CD8-positive, alpha-beta T cell (primary cell): ENCODE measurements at regions of chr22 and their contacts with region 1.

Region 1: DNA sequence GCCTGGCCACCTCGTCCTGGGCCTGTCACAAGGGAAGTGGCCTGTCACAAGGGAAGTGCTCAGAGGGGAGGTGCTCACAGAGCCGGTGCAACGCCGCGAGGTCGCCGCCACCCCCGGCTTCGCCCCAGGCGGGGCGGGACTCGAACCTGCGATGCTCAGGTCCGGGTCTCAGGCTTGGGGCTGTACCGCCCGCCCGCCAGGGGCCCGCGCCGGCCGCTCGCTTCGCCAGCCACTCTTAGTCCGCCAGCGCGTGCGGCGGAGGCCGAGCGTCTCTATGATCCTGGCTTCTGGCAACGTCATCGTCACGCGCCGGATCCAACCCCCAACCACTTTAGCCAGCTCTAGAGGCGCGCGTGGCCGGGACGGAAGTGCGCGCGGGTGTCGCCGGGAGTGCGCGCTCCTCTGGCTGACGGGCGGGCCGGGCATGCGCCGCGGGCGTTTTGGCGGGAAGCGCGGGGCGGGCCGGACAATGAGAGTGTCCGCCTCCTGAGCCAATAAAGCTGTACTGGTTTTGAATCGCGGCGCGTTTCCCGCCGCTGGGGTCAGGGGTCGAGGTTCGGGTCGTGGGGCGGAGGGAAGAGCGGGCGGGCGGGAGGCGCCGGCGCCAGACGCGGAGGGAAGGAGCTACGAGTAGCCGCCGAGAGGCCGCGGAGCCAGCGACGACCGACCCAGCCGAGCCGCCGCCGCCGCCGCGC is at the start of gene TRMT2A:
- DNase-seq: peak; percentile 91 to 99 (median 96)
- ATAC-seq: peak; percentile 80
- H3K4me3 ChIP-seq: peak within 1 kb of the TSS; percentile 80 to 96
- H3K4me3 Mint-ChIP-seq: peak within 1 kb of the TSS; percentile 90
- H3K27ac ChIP-seq: peak within 1 kb of the TSS; percentile 81 to 94
- H3K27ac Mint-ChIP-seq: peak within 1 kb of the TSS; percentile 93
- H3K4me1 ChIP-seq: peaks cover 38% of the 10 kb centered on the region
- H3K4me1 Mint-ChIP-seq: peaks cover 43% of the 10 kb centered on the region
- H3K27me3 ChIP-seq: no peaks in the 10 kb centered on the region
- H3K27me3 Mint-ChIP-seq: no peaks in the 10 kb centered on the region
- CTCF ChIP-seq: no peak
- total RNA-seq, gene TRMT2A: 57.8 to 62.8 TPM

Region 2: DNA sequence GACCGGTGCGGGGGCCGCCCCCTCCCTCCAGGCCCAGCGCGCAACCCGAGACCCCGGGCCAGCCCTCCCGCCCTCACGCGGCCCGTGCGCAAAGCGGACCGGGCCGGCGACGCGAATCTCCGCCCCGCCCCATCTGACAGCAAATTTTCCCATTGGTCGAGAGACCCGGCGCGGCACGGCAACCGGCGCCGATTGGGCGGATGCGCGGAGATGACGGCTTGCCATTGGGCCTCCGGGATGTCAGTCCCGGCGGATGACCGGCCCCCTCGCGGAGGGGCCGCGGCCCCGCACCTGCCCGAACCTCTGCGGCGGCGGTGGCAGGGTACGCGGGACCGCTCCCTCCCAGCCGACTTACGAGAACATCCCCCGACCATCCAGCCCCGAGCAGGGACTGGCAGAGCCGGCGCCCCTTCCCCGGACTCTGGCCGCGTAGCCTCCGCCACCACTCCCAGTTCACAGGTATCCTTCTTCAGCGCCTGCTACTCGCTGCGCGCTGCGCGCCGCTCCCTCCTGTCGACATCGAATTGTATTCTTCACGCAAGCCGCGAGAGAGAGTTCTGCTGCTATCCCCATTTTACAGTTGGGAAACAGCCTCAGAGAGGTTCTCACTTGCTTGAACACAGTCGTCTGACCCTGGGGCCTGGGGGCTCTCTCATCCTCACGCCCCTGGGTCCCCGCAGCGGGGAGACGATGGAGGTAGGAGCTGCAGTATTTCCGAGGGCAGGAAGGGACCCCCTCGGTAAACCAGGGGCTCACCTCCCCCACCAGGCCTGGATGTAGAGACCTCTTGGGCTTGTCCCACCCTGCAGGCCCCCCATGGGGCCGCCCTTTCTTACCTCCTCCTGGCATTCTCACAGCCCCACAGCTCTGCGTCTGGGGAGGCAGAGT is 100.1 kb before region 1 on chr22 and contains the start of gene ARVCF:
- CTCF ChIA-PET with region 1: interaction called, 3 read pairs
- POLR2A ChIA-PET with region 1: interaction called, 9 read pairs
- intact Hi-C with region 1: loop called (anchors 1 kb)
- DNase-seq: peak; percentile 85 to 96 (median 92)
- ATAC-seq: peak; percentile 66
- H3K4me3 ChIP-seq: peak within 1 kb of the TSS; percentile 79 to 81
- H3K4me3 Mint-ChIP-seq: peak within 1 kb of the TSS; percentile 91
- H3K27ac ChIP-seq: no peak within 1 kb of the TSS
- H3K27ac Mint-ChIP-seq: peak within 1 kb of the TSS; percentile 14
- H3K4me1 ChIP-seq: peaks cover 19% of the 10 kb centered on the region
- H3K4me1 Mint-ChIP-seq: peaks cover 25% of the 10 kb centered on the region
- H3K27me3 ChIP-seq: no peaks in the 10 kb centered on the region
- H3K27me3 Mint-ChIP-seq: no peaks in the 10 kb centered on the region
- CTCF ChIP-seq: no peak
- total RNA-seq, gene ARVCF: 1.1 to 2.3 TPM

Region 3: DNA sequence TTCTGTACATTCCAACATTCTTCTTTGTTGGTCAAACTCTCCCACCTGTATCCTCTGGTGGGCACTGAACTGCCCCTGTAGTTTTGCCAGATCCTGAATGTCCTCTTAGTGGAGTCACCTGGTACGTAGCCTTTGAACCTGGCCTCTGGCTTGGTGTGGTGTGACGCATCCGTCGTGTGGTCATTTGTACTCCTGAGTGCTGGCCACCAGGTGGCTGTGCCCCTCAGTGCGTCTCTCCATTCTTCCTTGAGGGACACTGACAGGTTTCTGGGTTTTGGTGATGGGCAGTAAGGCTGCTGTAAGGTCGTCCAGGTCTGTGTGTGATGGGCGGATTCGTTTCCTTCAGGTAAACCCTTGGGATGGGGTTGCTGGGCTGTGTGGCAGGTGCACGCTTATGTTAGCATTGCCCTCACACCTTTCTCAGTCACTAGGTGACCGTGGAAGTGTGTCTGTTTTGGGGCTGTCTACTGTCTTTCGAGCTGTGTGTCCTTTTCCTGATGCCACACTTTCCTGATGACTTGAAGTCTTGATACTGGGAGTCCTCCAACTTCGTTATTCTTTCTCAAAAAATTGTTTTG is 14.8 kb before region 1 on chr22:
- CTCF ChIA-PET with region 1: interaction called, 26 read pairs
- POLR2A ChIA-PET with region 1: interaction called, 5 read pairs
- intact Hi-C with region 1: loop called (anchors 1 kb)
- DNase-seq: no peak
- ATAC-seq: no peak
- H3K4me3 ChIP-seq: no peak overlapping the region
- H3K4me3 Mint-ChIP-seq: no peak overlapping the region
- H3K27ac ChIP-seq: peak overlapping the region in 1 of 2 experiments; percentile 17
- H3K27ac Mint-ChIP-seq: peak overlapping the region; percentile 70
- H3K4me1 ChIP-seq: peaks cover 37% of the 10 kb centered on the region
- H3K4me1 Mint-ChIP-seq: peaks cover 48% of the 10 kb centered on the region
- H3K27me3 ChIP-seq: no peaks in the 10 kb centered on the region
- H3K27me3 Mint-ChIP-seq: no peaks in the 10 kb centered on the region
- CTCF ChIP-seq: no peak

Region 4: GRCh38 chr22:20174785-20175596 is 57.9 kb after region 1 on chr22:
- CTCF ChIA-PET with region 1: no interaction called
- POLR2A ChIA-PET with region 1: no interaction called
- intact Hi-C with region 1: no loop called
- DNase-seq: no peak
- ATAC-seq: no peak
- H3K4me3 ChIP-seq: no peak overlapping the region
- H3K4me3 Mint-ChIP-seq: no peak overlapping the region
- H3K27ac ChIP-seq: no peak overlapping the region
- H3K27ac Mint-ChIP-seq: no peak overlapping the region
- H3K4me1 ChIP-seq: no peaks in the 10 kb centered on the region
- H3K4me1 Mint-ChIP-seq: no peaks in the 10 kb centered on the region
- H3K27me3 ChIP-seq: no peaks in the 10 kb centered on the region
- H3K27me3 Mint-ChIP-seq: no peaks in the 10 kb centered on the region
- CTCF ChIP-seq: no peak

Region 5: DNA sequence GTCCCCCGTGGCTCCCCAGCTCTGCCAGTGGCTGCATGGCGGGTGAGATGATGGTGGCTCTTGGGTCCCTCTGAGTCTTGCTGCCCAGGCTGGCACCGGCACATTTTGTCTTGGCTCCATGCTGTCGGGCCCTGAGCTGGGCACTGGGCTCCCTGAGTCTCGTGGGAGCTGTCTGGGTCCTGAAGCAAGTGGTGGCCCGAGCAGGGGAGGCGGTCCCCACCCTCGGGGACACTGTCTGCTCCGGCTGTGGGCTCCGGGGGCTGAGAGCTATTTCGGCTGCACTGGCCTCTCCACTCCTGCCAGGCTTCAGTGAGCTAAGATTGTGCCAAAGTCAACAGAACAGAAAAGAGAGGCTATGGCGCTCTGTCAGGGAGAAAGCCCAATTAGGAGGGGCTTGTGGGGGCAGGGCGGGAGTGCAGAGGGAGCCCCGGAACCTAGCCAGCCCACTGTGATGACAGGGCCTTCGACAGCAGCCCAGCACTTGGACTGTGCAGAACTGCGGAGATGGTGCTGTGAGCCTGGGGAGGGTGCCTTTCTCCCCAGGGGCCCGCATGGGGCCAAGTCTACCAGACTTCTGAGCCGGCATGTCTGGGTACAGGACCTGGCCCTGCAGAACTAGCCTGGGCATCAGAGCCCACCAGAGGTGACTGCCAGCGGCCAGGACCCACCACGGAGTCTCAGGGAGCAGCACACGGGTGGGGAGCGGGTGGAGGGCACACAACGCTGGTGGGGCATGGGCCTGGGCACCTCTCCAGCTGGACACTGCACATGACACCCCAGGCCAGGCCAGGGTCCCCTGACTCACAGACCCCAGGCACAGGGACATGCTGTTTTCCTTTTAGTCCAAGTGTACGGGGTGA is 113.0 kb after region 1 on chr22:
- CTCF ChIA-PET with region 1: no interaction called
- POLR2A ChIA-PET with region 1: no interaction called
- intact Hi-C with region 1: no loop called
- DNase-seq: no peak
- ATAC-seq: no peak
- H3K4me3 ChIP-seq: no peak overlapping the region
- H3K4me3 Mint-ChIP-seq: no peak overlapping the region
- H3K27ac ChIP-seq: no peak overlapping the region
- H3K27ac Mint-ChIP-seq: no peak overlapping the region
- H3K4me1 ChIP-seq: no peaks in the 10 kb centered on the region
- H3K4me1 Mint-ChIP-seq: no peaks in the 10 kb centered on the region
- H3K27me3 ChIP-seq: no peaks in the 10 kb centered on the region
- H3K27me3 Mint-ChIP-seq: no peaks in the 10 kb centered on the region
- CTCF ChIP-seq: no peak

Region 6: GRCh38 chr22:20393909-20394691 is 277.0 kb after region 1 on chr22 and contains the start of gene ZNF74:
- CTCF ChIA-PET with region 1: no interaction called
- POLR2A ChIA-PET with region 1: no interaction called
- intact Hi-C with region 1: loop called in 1 of 2 experiments (anchors 5 kb)
- DNase-seq: peak; percentile 68 to 95 (median 84)
- ATAC-seq: peak; percentile 98
- H3K4me3 ChIP-seq: peak within 1 kb of the TSS; percentile 69 to 86
- H3K4me3 Mint-ChIP-seq: peak within 1 kb of the TSS; percentile 87
- H3K27ac ChIP-seq: peak within 1 kb of the TSS; percentile 46 to 79
- H3K27ac Mint-ChIP-seq: peak within 1 kb of the TSS; percentile 95
- H3K4me1 ChIP-seq: peaks cover 21% of the 10 kb centered on the region
- H3K4me1 Mint-ChIP-seq: peaks cover 37% of the 10 kb centered on the region
- H3K27me3 ChIP-seq: no peaks in the 10 kb centered on the region
- H3K27me3 Mint-ChIP-seq: no peaks in the 10 kb centered on the region
- CTCF ChIP-seq: no peak
- total RNA-seq, gene ZNF74: 1.9 to 2.1 TPM